OCI-LY7 (cell line): ENCODE measurements at regions of chr15 and their contacts with region 1.

Region 1: GRCh38 chr15:39686000-39686613 is 96.5 kb downstream of the FSIP1 start:
- DNase-seq: peak; percentile 60
- H3K4me3 ChIP-seq: no peak overlapping the region
- H3K27ac ChIP-seq: no peak overlapping the region
- H3K4me1 ChIP-seq: no peaks in the 10 kb centered on the region
- CTCF ChIP-seq: peak; percentile 93

Region 2: DNA sequence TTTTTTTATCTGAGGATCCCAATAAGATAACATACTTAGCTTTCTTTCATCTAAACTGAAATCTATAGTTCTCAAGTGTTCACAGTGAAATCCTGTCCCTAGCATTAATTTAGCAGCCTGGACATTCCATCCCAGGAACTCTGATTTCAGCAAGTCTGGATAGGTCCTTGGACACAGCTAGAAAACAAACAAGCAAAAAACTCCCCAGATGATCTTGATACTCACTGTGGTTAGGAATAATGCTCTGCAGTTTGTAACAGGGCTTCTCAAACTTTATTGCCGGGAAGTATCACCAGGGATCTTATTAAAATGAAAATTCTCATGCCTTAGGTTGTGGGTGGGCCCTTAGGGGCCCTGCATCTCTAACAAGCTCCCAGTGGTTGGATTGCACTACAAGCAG is 81.0 kb before region 1 on chr15:
- CTCF ChIA-PET with region 1: no interaction called
- POLR2A ChIA-PET with region 1: no interaction called
- intact Hi-C with region 1: no loop called
- DNase-seq: no peak
- H3K4me3 ChIP-seq: no peak overlapping the region
- H3K27ac ChIP-seq: no peak overlapping the region
- H3K4me1 ChIP-seq: no peaks in the 10 kb centered on the region
- CTCF ChIP-seq: no peak

Region 3: DNA sequence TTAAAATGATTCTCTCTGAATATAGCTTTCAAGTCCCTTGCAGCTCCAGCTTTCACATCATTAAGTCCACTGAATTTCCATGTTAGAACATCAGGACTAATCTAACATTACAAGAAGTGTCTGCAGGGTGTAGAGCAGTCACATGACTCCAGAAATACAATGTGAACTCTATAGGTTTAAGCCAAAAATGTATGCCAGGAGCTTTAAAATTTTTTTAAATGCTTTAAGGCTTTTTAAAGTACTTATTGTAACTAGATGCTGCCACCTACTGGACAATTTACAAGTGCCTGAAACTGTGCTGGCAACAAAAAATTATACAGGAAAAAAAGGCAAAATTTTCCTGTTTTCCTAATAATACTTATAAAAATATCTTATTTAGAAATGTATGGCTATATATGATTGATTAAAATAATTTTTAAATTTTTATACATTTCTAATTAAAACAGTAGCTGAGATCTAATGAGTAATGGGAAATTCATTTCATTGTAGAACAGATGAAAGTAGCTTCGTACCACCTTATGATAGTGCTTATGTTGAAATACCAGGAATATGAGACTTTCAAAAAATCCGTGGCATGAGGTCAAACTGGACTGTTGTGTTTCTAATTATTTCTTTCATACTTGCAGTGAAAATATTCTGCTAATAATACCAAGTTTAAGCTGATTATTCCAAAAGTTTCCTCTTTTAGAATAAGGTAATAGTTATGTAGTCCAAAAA is 70.9 kb after region 1 on chr15:
- CTCF ChIA-PET with region 1: no interaction called
- POLR2A ChIA-PET with region 1: no interaction called
- intact Hi-C with region 1: loop called (anchors 1 kb)
- DNase-seq: peak; percentile 69
- H3K4me3 ChIP-seq: no peak overlapping the region
- H3K27ac ChIP-seq: no peak overlapping the region
- H3K4me1 ChIP-seq: no peaks in the 10 kb centered on the region
- CTCF ChIP-seq: peak; percentile 90

Region 4: DNA sequence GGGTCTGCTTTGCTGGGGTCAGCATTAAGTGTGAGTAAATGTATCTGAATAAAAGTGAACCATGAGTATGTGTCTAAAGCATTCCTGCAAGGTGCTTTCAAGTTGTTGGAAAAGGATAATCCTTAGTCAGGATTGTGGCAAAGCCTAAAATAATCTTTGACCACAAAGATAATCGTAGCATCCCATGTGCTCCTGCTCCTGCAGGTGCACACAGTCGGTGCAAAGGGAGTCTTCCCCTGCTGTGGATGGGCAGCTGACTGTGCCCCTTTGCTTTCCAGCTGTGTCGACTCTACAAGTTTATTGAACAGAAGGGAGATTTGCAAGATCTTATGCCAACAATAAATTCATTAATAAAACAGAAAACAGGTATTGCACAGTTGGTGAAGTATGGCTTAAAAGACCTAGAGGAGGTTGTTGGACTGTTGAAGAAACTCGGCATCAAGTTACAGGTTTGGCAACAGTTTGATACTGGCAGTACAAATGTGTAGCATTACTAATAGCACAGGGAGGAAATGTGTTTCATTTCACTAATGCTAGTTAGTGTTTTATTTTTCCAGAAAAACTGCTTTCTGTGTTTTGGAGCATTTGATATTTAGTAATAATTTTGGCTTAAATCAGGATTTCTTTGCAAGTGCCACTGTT is 330.2 kb after region 1 on chr15:
- CTCF ChIA-PET with region 1: no interaction called
- POLR2A ChIA-PET with region 1: no interaction called
- intact Hi-C with region 1: loop called (anchors 5 kb)
- DNase-seq: no peak
- H3K4me3 ChIP-seq: no peak overlapping the region
- H3K27ac ChIP-seq: no peak overlapping the region
- H3K4me1 ChIP-seq: no peaks in the 10 kb centered on the region
- CTCF ChIP-seq: no peak